Activated CD4-positive, alpha-beta memory T cell treated with anti-CD3 and anti-CD28 coated beads for 36 hours (primary cell): ENCODE measurements at regions of chr19 and their contacts with region 1.

Region 1: DNA sequence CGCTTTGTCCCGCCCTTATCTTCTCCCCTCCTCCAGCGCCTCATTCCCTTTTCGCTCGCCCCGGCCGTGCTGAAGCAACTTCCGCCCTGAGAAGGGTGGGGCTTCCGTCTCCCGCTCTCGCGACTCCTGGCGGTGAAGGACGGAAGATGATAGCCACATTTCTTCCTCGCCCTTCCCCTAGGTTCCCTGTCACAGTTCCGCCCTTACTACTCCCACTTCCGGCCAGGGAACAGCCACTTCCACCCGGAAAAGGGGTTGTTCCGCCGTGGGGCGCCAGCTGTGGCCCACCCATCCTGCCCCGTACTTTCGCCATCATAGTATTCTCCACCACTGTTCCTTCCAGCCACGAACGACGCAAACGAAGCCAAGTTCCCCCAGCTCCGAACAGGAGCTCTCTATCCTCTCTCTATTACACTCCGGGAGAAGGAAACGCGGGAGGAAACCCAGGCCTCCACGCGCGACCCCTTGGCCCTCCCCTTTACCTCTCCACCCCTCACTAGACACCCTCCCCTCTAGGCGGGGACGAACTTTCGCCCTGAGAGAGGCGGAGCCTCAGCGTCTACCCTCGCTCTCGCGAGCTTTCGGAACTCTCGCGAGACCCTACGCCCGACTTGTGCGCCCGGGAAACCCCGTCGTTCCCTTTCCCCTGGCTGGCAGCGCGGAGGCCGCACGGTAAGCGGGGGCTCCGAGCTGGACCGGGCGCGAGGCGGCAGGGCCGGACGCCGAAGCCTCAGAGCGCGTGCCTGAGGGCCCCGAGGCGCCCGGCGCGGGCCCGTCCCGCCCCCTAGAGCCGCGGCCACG is at the start of gene RPS19:
- DNase-seq: peak; percentile 99
- H3K4me3 Mint-ChIP-seq: peak within 1 kb of the TSS; percentile 87
- H3K27ac Mint-ChIP-seq: peak within 1 kb of the TSS; percentile 94
- H3K4me1 Mint-ChIP-seq: peaks cover 43% of the 10 kb centered on the region
- H3K27me3 Mint-ChIP-seq: no peaks in the 10 kb centered on the region
- total RNA-seq, gene RPS19: 3,181 to 3,314 TPM

Region 2: GRCh38 chr19:41849067-41849466 is 10.8 kb before region 1 on chr19:
- CTCF ChIA-PET with region 1: interaction called, 18 read pairs
- POLR2A ChIA-PET with region 1: no interaction called
- intact Hi-C with region 1: no loop called
- DNase-seq: no peak
- H3K4me3 Mint-ChIP-seq: no peak overlapping the region
- H3K27ac Mint-ChIP-seq: no peak overlapping the region
- H3K4me1 Mint-ChIP-seq: no peaks in the 10 kb centered on the region
- H3K27me3 Mint-ChIP-seq: peaks cover 5% of the 10 kb centered on the region

Region 3: GRCh38 chr19:41883821-41884733 is 24.3 kb after region 1 on chr19:
- CTCF ChIA-PET with region 1: interaction called, 20 read pairs
- POLR2A ChIA-PET with region 1: interaction called, 39 read pairs
- intact Hi-C with region 1: loop called (anchors 1 kb)
- DNase-seq: peak; percentile 95
- H3K4me3 Mint-ChIP-seq: peak overlapping the region; percentile 95
- H3K27ac Mint-ChIP-seq: peak overlapping the region; percentile 97
- H3K4me1 Mint-ChIP-seq: peaks cover 59% of the 10 kb centered on the region
- H3K27me3 Mint-ChIP-seq: no peaks in the 10 kb centered on the region

Region 4: DNA sequence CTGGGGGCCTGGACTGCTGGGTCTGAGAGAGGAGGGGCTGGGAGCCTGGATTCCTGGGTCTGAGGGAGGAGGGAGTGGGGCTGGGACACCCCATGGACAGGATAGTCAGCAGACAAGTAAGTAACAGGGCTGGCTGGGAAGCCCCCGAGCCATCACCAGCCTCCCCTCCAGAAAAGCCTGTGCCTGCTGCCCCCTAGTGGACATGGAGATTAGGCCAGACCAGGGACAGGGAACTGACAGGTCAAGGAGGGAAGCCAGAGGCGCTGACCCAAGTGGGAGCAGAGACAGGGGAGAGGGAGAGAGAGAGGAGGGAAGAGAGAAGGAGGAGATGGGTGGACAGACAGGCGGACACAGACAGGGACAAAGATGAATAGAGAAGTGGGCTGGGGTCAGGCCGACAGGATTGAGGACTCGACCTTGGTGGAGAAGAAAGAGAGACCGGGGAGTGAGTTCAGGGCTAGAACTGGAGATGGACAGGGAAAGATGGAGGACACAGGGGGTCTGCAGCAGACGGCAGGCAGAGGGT is 75.1 kb after region 1 on chr19:
- CTCF ChIA-PET with region 1: interaction called, 4 read pairs
- POLR2A ChIA-PET with region 1: no interaction called
- intact Hi-C with region 1: loop called (anchors 2 kb)
- DNase-seq: peak; percentile 88
- H3K4me3 Mint-ChIP-seq: peak overlapping the region; percentile 4
- H3K27ac Mint-ChIP-seq: peak overlapping the region; percentile 55
- H3K4me1 Mint-ChIP-seq: peaks cover 35% of the 10 kb centered on the region
- H3K27me3 Mint-ChIP-seq: peaks cover 1% of the 10 kb centered on the region

Region 5: DNA sequence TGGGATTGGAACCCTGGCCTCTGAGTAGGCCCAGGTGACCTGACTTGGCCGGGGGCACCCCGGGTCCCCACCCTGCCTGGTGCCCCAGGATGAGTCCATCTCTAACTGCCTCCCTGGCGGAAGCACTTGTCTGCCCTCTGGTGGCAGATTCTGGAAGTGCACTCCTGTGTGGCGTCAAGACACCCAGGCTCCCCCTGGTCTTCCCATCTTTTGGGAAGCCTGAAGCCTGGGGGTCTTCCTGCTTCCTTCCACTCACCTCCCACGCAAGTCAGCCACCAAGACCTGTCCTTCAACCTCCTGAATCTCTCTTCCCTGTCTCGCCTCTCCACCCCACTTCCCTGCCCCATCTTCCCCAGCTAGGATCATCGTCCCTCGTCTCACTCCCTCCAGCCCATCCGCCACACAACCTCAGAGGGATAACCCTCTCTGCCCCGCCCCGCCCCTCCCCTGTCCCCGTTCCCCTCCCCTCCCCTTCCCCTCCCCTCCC is 91.9 kb after region 1 on chr19:
- CTCF ChIA-PET with region 1: interaction called, 29 read pairs
- POLR2A ChIA-PET with region 1: interaction called, 13 read pairs
- intact Hi-C with region 1: no loop called
- DNase-seq: peak; percentile 91
- H3K4me3 Mint-ChIP-seq: no peak overlapping the region
- H3K27ac Mint-ChIP-seq: no peak overlapping the region
- H3K4me1 Mint-ChIP-seq: peaks cover 15% of the 10 kb centered on the region
- H3K27me3 Mint-ChIP-seq: no peaks in the 10 kb centered on the region

Region 6: GRCh38 chr19:42343344-42344110 is 483.7 kb after region 1 on chr19:
- CTCF ChIA-PET with region 1: no interaction called
- POLR2A ChIA-PET with region 1: no interaction called
- intact Hi-C with region 1: no loop called
- DNase-seq: no peak
- H3K4me3 Mint-ChIP-seq: no peak overlapping the region
- H3K27ac Mint-ChIP-seq: no peak overlapping the region
- H3K4me1 Mint-ChIP-seq: no peaks in the 10 kb centered on the region
- H3K27me3 Mint-ChIP-seq: no peaks in the 10 kb centered on the region